ENCODE measurements at regions of chr6 and their contacts with region 1.

Region 1: DNA sequence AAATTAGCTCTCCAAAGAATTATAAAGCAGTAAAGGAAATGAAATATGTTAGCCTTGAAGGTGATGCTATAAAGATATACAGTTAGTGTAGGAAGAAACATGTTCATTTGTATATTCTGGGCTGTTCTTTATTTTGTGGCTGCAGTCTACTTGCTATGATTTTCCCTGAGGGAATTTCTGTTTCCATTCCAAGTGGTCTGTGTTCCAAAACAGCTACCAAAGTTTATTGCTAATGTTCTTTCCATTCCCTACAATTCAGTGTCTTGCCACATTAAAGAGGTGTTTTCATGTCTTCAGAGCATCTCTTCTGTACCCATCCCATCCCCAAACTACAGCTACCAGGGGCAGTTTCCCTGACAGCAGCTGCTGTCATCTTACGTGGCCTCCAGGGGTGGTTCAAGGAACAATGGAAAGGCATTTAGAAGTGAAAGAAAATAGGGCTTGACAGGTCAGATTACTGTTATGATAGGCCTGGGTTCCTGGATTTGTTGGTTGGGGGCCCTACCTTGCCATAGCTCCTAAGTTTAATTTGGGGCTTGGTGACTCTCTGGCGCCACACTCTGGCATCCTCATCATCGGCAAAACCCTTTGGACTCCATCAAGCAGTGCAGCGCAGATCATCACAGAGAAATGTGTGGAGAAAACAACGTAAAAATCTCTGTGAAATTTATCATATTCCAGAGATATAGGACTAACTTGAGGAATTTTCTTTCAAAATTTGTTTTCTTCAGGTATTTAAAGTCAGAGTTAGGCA is 33.8 kb upstream of the AIG1 start:
- DNase-seq: peak in 1 of 4 experiments; percentile 45
- ATAC-seq: peak; percentile 87
- H3K4me3 ChIP-seq: no peak overlapping the region
- H3K27ac ChIP-seq: no peak overlapping the region
- H3K4me1 ChIP-seq: no peaks in the 10 kb centered on the region
- H3K27me3 ChIP-seq: no peaks in the 10 kb centered on the region
- CTCF ChIP-seq: peak; percentile 63 to 71 (median 66)
- EP300 ChIP-seq: no peak
- POLR2A ChIP-seq: no peak
- RAD21 ChIP-seq: peak; percentile 27 to 74; a peak in 3 of 4 replicates

Region 2: GRCh38 chr6:142819603-142820337 is 207.1 kb before region 1 on chr6:
- CTCF ChIA-PET with region 1: no interaction called
- POLR2A ChIA-PET with region 1: no interaction called
- in situ Hi-C with region 1: no loop called
- intact Hi-C with region 1: loop called (anchors 10 kb)
- DNase-seq: no peak
- ATAC-seq: 0 out of 3 replicates have a peak, but pooled peaks have one; percentile 22
- H3K4me3 ChIP-seq: no peak overlapping the region
- H3K27ac ChIP-seq: no peak overlapping the region
- H3K4me1 ChIP-seq: no peaks in the 10 kb centered on the region
- H3K27me3 ChIP-seq: no peaks in the 10 kb centered on the region
- CTCF ChIP-seq: no peak
- EP300 ChIP-seq: no peak
- POLR2A ChIP-seq: no peak
- RAD21 ChIP-seq: no peak

Region 3: GRCh38 chr6:142893075-142893474 is 133.8 kb before region 1 on chr6:
- CTCF ChIA-PET with region 1: no interaction called
- POLR2A ChIA-PET with region 1: no interaction called
- in situ Hi-C with region 1: no loop called
- intact Hi-C with region 1: no loop called
- DNase-seq: no peak
- ATAC-seq: no peak
- H3K4me3 ChIP-seq: no peak overlapping the region
- H3K27ac ChIP-seq: no peak overlapping the region
- H3K4me1 ChIP-seq: no peaks in the 10 kb centered on the region
- H3K27me3 ChIP-seq: peaks cover 0 to 5% of the 10 kb centered on the region in 2 experiments; a peak in 1 of 5 replicates
- CTCF ChIP-seq: no peak
- EP300 ChIP-seq: no peak
- POLR2A ChIP-seq: no peak
- RAD21 ChIP-seq: no peak

Region 4: DNA sequence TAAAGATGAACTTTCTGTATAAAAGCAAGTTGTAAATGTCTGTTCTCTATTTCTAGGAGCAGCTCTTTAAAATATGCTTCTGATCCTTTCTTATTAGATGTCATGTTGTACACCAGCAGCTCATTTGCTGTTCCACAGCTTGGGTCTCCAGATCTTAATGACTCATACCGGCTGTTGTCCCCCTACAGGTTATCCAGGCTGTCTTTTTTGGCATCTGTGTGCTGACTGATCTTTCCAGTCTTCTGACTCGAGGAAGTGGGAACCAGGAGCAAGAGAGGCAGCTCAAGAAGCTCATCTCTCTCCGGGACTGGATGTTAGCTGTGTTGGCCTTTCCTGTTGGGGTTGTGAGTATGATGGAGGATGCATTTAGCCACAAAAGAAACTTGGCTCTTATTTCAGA is 109.8 kb after region 1 on chr6:
- CTCF ChIA-PET with region 1: no interaction called
- POLR2A ChIA-PET with region 1: no interaction called
- in situ Hi-C with region 1: no loop called
- intact Hi-C with region 1: no loop called
- DNase-seq: peak in 3 of 4 experiments; percentile 23 to 58 (median 38)
- ATAC-seq: peak; percentile 89
- H3K4me3 ChIP-seq: no peak overlapping the region
- H3K27ac ChIP-seq: no peak overlapping the region
- H3K4me1 ChIP-seq: no peaks in the 10 kb centered on the region
- H3K27me3 ChIP-seq: no peaks in the 10 kb centered on the region
- CTCF ChIP-seq: 0 out of 6 replicates have a peak, but pooled peaks of 2 of the 3 experiments have one; percentile 11 to 24
- EP300 ChIP-seq: no peak
- POLR2A ChIP-seq: no peak
- RAD21 ChIP-seq: no peak